Activated naive CD4-positive, alpha-beta T cell treated with anti-CD3 and anti-CD28 coated beads for 36 hours (primary cell): ENCODE measurements at regions of chr2 and their contacts with region 1.

Region 1: GRCh38 chr2:189698020-189698887 is 23.8 kb downstream of the ANKAR start:
- DNase-seq: peak; percentile 59
- H3K4me3 Mint-ChIP-seq: peak overlapping the region; percentile 25
- H3K27ac Mint-ChIP-seq: no peak overlapping the region
- H3K4me1 Mint-ChIP-seq: no peaks in the 10 kb centered on the region
- H3K27me3 Mint-ChIP-seq: no peaks in the 10 kb centered on the region

Region 2: DNA sequence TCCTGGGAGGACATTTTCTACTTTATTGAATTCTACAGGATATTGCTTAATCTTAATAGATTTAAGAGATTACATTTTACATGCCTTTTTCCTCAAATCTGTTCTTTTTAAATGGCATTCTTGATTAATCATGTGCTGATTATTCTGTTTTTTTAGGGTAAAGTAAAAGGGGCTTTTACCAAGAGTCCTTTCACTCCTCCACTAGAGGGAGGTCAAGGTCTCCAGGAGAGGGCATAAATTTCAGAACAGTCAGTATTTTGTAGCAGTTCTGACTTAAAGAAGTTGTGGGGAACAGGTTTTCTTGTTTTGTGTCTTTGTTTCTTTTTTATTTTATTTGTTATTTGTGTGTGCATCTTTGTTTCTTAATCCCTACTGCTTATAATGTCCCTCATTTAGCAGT is 231.6 kb before region 1 on chr2:
- CTCF ChIA-PET with region 1: no interaction called
- intact Hi-C with region 1: loop called (anchors 5 kb)
- DNase-seq: no peak
- H3K4me3 Mint-ChIP-seq: no peak overlapping the region
- H3K27ac Mint-ChIP-seq: no peak overlapping the region
- H3K4me1 Mint-ChIP-seq: no peaks in the 10 kb centered on the region
- H3K27me3 Mint-ChIP-seq: no peaks in the 10 kb centered on the region

Region 3: DNA sequence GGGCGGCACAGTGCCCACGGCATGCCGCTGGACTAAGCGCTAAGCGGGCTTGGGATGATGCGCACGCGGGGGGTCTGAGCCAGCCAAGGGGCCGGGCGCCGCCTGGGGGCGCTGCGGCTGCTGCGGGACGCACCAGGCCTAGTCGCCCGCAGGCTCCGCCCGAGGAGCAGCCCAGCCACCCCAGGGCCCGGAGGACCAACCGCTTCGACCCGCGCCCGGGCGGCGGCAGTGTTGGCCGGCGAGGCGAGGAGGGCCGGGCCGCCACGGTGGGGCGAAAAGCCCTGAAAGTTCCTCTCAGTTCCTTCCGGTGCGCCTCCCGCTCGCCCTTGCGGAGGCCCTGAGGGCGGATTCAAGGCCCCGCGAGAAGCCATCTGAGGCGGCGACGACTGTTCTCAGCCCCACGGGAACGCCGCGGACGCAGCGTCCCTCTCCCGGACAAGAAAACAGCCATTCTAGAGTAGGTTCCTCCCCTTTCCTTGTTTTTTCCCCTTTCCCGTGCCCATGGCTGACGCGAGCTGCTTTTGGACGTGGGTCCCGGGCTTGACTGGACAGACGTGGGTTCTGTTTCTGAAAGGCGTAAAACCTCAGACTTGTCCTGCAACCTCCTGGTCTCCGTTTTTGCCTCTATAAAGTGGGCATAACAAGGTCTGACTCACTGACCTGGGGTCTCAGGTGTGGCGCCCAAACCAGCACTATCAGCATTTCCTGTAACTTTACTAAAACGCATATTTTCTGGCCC is 23.7 kb before region 1 on chr2 and contains the start of gene ANKAR:
- CTCF ChIA-PET with region 1: interaction called, 46 read pairs
- intact Hi-C with region 1: loop called (anchors 1 kb)
- DNase-seq: peak; percentile 78
- H3K4me3 Mint-ChIP-seq: peak within 1 kb of the TSS; percentile 89
- H3K27ac Mint-ChIP-seq: peak within 1 kb of the TSS; percentile 94
- H3K4me1 Mint-ChIP-seq: peaks cover 35% of the 10 kb centered on the region
- H3K27me3 Mint-ChIP-seq: no peaks in the 10 kb centered on the region
- total RNA-seq, gene ANKAR: 1.6 to 2.5 TPM

Region 4: DNA sequence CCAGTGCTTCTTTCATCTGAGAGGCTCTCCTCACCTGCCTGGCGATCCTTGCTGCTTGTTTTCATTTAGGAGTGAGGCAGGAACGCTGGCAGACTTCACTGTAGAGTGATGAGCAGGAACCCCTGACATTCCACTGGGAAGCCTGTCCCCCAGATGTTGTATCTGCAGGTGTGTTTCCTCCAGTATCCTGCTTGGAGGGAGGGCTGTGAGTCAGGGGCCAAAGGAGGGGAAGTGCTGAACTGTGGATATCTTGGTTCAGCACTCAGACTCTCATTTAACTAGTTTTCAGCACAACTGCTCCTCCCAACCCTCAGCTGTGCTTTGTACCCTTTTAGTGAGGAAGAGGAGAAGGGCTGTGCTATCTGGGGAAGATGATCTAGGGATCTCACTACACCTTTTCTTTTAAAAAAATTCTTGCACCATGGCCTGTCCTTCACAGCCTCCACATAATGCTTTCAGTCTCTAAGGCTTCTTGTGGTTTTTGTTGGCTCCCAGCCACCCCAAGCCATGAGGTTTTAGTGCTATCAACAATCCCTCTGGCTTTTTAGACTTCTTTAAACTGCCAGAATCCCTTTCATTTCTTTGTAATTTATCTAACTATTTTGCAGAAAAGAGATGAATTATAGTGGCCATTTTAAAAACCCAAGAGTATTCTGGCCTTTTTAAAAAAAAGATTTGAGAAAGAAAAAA is 12.6 kb before region 1 on chr2:
- CTCF ChIA-PET with region 1: interaction called, 16 read pairs
- intact Hi-C with region 1: no loop called
- DNase-seq: no peak
- H3K4me3 Mint-ChIP-seq: no peak overlapping the region
- H3K27ac Mint-ChIP-seq: no peak overlapping the region
- H3K4me1 Mint-ChIP-seq: peaks cover 27% of the 10 kb centered on the region
- H3K27me3 Mint-ChIP-seq: no peaks in the 10 kb centered on the region

Region 5: DNA sequence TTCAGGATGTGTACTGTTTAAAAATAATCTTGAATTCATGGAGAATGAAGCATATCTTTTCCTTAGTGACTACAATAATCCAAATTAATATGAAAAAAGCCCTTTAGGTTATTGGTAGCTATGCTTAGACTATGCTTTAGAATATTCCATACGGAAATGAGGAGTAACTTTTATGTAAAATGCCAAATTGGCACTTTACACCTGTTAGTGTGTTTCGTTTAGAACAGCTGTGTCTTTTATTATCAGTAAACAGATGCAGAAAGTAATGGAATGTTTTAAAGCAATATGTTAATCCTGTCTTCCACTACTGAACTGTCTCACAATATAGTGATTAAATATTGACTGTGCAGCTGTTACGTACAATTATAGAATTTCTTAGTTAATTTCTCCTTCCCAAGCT is 215.6 kb after region 1 on chr2:
- CTCF ChIA-PET with region 1: no interaction called
- intact Hi-C with region 1: no loop called
- DNase-seq: no peak
- H3K4me3 Mint-ChIP-seq: no peak overlapping the region
- H3K27ac Mint-ChIP-seq: no peak overlapping the region
- H3K4me1 Mint-ChIP-seq: no peaks in the 10 kb centered on the region
- H3K27me3 Mint-ChIP-seq: peaks cover 16% of the 10 kb centered on the region

Region 6: DNA sequence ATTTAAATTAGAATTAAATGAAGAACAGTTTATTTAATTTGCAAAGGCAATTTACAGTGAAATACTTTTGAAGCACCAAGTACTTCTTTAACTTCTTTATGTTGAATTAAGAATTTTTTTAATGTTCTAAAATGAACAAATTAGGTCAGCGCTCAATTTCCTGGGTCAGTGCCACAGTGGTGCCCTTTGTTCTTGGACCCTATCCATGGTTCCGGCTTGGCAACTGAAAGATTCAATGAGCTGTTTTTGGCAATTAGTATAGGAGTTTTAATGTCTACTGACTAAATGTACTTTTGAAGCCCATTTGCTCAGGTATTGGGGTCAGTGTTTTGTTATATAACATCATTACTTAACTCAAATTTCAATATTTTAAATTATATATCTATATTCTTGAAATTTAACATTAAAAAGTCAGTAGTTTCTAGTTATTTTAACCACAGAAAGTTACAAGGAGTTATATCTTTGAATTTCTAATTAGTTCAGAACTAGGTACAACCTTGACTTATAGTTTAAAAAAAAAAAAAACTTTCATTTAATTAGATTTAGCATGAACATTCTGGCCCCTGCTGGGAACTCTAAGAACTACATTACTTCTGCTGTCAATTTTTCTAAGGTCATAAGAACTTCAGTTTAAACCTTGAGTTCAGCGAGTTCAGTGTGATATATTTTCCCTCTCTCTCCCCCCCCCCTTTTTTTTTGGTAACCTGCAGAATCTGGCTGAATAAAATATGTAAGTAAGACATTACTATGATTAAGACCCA is 371.9 kb after region 1 on chr2:
- CTCF ChIA-PET with region 1: no interaction called
- intact Hi-C with region 1: loop called (anchors 1 kb)
- DNase-seq: peak; percentile 54
- H3K4me3 Mint-ChIP-seq: no peak overlapping the region
- H3K27ac Mint-ChIP-seq: no peak overlapping the region
- H3K4me1 Mint-ChIP-seq: no peaks in the 10 kb centered on the region
- H3K27me3 Mint-ChIP-seq: no peaks in the 10 kb centered on the region